Mammary epithelial cell (primary cell): ENCODE measurements at regions of chr15 and their contacts with region 1.

Region 1: GRCh38 chr15:89556413-89557262 is 18.6 kb upstream of the TICRR start:
- DNase-seq: peak; percentile 63
- H3K4me3 ChIP-seq: no peak overlapping the region
- H3K27ac ChIP-seq: no peak overlapping the region
- H3K4me1 ChIP-seq: no peaks in the 10 kb centered on the region
- H3K27me3 ChIP-seq: no peaks in the 10 kb centered on the region
- CTCF ChIP-seq: peak; percentile 80 to 82

Region 2: DNA sequence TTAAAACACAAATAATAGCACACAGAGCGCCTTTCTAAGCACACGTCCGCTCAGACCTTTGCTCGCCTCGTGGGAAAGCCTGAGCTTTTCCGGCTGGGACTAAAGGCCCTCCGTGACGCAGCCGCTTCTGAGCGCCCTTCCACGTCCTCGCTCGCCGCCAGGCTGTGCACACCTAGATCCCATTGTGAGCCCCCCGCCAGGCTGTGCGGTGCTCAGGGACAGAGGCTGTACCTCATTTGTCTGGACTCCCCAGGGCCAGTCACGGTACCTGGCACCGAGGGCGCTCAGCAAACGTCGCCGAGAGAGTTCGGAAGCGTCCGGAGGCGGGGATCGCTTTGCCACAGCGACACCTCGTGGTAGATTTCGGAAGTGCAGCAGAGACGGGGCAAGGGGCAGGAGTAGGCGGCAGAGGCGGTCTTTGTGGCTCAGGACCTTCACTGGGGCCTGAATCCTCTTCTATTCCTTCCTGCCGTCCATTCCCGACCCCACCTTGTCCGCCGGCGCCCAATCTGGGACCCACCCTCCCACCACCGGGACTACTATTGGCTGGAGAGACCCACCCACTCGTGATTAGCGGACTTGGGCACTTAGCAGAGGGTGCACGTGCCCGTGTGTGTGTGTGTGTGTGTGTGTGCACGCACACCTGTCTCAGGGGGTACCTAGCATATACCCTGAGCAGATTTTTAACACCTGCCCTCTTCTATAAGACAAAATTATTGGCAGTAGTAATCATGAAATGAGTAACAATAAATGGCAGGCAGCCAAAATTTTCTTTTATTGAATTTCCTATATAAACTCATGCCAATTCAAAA is 125.9 kb before region 1 on chr15:
- CTCF ChIA-PET with region 1: no interaction called
- dilution Hi-C with region 1: no loop called
- in situ Hi-C with region 1: loop called in 1 of 2 experiments (anchors 25 kb)
- intact Hi-C with region 1: no loop called
- DNase-seq: peak; percentile 60
- H3K4me3 ChIP-seq: peak overlapping the region in 2 of 3 experiments; percentile 37 to 39
- H3K27ac ChIP-seq: no peak overlapping the region
- H3K4me1 ChIP-seq: peaks cover 7% of the 10 kb centered on the region
- H3K27me3 ChIP-seq: no peaks in the 10 kb centered on the region
- CTCF ChIP-seq: peak; percentile 88 to 93

Region 3: GRCh38 chr15:89442671-89443307 is 113.8 kb before region 1 on chr15:
- CTCF ChIA-PET with region 1: no interaction called
- dilution Hi-C with region 1: no loop called
- in situ Hi-C with region 1: loop called in 1 of 2 experiments (anchors 25 kb)
- intact Hi-C with region 1: loop called (anchors 1 kb)
- DNase-seq: no peak
- H3K4me3 ChIP-seq: no peak overlapping the region
- H3K27ac ChIP-seq: no peak overlapping the region
- H3K4me1 ChIP-seq: no peaks in the 10 kb centered on the region
- H3K27me3 ChIP-seq: no peaks in the 10 kb centered on the region
- CTCF ChIP-seq: peak; percentile 74 to 82

Region 4: DNA sequence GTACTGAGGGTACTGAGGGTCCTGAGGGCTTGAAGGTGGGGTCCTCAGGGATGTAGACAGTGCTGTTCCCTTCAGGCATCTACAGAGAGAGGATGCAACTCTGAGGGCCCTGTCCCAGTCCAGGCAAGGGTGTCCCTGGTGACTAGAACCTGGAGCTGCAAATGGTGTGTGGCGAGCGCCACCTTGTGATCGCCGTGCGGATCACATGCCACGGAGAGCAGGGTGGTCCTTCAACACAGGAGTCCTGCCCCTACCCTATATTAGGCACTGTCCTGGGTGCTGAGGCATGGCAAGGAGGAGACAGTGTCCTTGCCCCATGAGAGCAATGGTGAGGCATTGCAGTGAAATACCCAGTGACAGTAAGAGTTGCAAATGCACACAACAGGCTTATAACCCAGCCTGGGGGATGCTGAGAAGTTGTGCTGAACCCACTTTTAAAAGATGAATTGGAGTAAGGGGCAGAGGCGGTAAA is 83.8 kb before region 1 on chr15:
- CTCF ChIA-PET with region 1: no interaction called
- dilution Hi-C with region 1: loop called (anchors 5 kb)
- in situ Hi-C with region 1: no loop called
- intact Hi-C with region 1: no loop called
- DNase-seq: peak; percentile 37
- H3K4me3 ChIP-seq: no peak overlapping the region
- H3K27ac ChIP-seq: no peak overlapping the region
- H3K4me1 ChIP-seq: peaks cover 8% of the 10 kb centered on the region
- H3K27me3 ChIP-seq: peaks cover 4% of the 10 kb centered on the region
- CTCF ChIP-seq: peak; percentile 80 to 92

Region 5: GRCh38 chr15:89496155-89497098 is 60.2 kb before region 1 on chr15 and contains the start of gene RHCG:
- CTCF ChIA-PET with region 1: interaction called, 12 read pairs
- dilution Hi-C with region 1: no loop called
- in situ Hi-C with region 1: loop called (anchors 10 kb)
- intact Hi-C with region 1: loop called (anchors 1 kb)
- DNase-seq: peak; percentile 57
- H3K4me3 ChIP-seq: no peak within 1 kb of the TSS
- H3K27ac ChIP-seq: no peak within 1 kb of the TSS
- H3K4me1 ChIP-seq: peaks cover 29% of the 10 kb centered on the region
- H3K27me3 ChIP-seq: no peaks in the 10 kb centered on the region
- CTCF ChIP-seq: peak; percentile 2 to 25
- total RNA-seq, gene RHCG: 0.89 to 2.5 TPM

Region 6: GRCh38 chr15:89514596-89515406 is 41.8 kb before region 1 on chr15:
- CTCF ChIA-PET with region 1: no interaction called
- dilution Hi-C with region 1: no loop called
- in situ Hi-C with region 1: no loop called
- intact Hi-C with region 1: loop called (anchors 1 kb)
- DNase-seq: peak; percentile 99
- H3K4me3 ChIP-seq: no peak overlapping the region
- H3K27ac ChIP-seq: peak overlapping the region; percentile 91
- H3K4me1 ChIP-seq: peaks cover 39% of the 10 kb centered on the region
- H3K27me3 ChIP-seq: no peaks in the 10 kb centered on the region
- CTCF ChIP-seq: no peak